Activated CD4-positive, alpha-beta T cell treated with anti-CD3 and anti-CD28 coated beads, Interleukin-2, amount 10 ng/mL, durations not matched to agents 7 days and 5 days (primary cell): ENCODE measurements at regions of chr1 and their contacts with region 1.

Region 1: DNA sequence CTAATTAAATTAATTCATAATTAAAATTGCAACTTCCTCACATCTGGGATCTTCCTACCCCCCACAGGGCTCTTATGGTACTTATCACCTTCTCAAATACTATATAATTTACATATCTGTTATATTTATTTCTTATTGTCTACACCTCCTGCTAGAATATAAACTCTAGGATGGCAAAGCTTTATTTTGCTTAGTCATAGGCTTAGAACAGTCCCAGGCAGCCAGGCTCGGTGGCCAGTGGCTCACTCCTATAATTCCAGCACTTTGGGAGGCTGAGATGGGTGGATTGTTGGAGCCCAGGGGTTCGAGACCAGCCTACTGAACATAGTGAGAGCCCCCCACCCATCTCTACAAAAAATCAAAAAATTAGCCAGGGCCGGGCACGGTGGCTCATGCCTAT is 10.0 kb upstream of the VPS13D start:
- DNase-seq: no peak
- H3K4me3 Mint-ChIP-seq: no peak overlapping the region
- H3K27ac Mint-ChIP-seq: no peak overlapping the region
- H3K4me1 Mint-ChIP-seq: no peaks in the 10 kb centered on the region
- H3K27me3 Mint-ChIP-seq: peaks cover 23% of the 10 kb centered on the region

Region 2: GRCh38 chr1:11952455-11953109 is 267.2 kb before region 1 on chr1:
- CTCF ChIA-PET with region 1: no interaction called
- POLR2A ChIA-PET with region 1: no interaction called
- DNase-seq: no peak
- H3K4me3 Mint-ChIP-seq: no peak overlapping the region
- H3K27ac Mint-ChIP-seq: no peak overlapping the region
- H3K4me1 Mint-ChIP-seq: no peaks in the 10 kb centered on the region
- H3K27me3 Mint-ChIP-seq: no peaks in the 10 kb centered on the region

Region 3: GRCh38 chr1:12208764-12209494 is 10.9 kb before region 1 on chr1:
- CTCF ChIA-PET with region 1: interaction called, 12 read pairs
- POLR2A ChIA-PET with region 1: no interaction called
- DNase-seq: peak; percentile 87
- H3K4me3 Mint-ChIP-seq: no peak overlapping the region
- H3K27ac Mint-ChIP-seq: peak overlapping the region; percentile 76
- H3K4me1 Mint-ChIP-seq: peaks cover 63% of the 10 kb centered on the region
- H3K27me3 Mint-ChIP-seq: peaks cover 3% of the 10 kb centered on the region